ENCODE measurements at regions of chr2 and their contacts with region 1.

Region 1: DNA sequence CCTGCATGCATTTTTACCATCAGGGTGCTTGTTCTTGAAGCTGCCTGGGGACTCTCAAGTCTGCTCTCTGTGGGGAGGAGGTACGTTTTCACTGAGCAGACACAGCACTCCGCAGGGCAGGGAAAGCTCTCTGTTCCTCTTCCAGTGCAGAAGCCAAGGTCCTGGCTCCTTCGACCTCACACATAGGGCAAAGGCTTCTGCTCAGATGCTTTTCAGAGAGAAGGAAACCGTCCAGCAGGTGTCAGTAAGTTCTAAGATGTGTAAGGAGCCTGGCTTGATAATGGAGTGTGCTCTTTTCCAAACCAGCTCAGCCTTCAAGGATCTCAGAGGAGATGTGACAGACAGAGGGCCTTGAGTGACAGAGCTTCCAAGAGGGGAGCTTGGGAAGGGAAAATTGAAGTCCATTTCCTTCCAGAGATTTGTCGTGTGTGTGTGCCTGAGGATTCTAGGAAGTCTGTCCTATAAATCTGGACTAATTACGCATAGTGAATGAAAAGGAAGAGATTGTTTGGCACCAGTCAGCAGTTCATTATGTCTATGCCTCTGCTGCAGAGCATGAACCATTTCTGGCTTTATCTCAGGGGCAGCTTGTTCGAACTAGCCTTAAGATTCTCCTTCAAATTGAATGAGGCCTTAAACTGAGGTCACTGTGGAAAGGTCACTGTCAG is 67.3 kb upstream of the UPP2 start:
- DNase-seq: peak; percentile 83

Region 2: GRCh38 chr2:157572725-157573124 is 461.6 kb before region 1 on chr2:
- in situ Hi-C with region 1: no loop called
- DNase-seq: peak; percentile 19

Region 3: GRCh38 chr2:158456309-158457066 is 422.2 kb after region 1 on chr2 and contains the starts of genes CCDC148 and PKP4:
- in situ Hi-C with region 1: loop called (anchors 25 kb)
- DNase-seq: peak; percentile 94

Region 4: GRCh38 chr2:158745044-158745865 is 710.9 kb after region 1 on chr2:
- in situ Hi-C with region 1: loop called (anchors 25 kb)
- DNase-seq: peak; percentile 56

Measured in KBM-7 (cell line).